ENCODE measurements at regions of chr1 and their contacts with region 1.

Region 1: DNA sequence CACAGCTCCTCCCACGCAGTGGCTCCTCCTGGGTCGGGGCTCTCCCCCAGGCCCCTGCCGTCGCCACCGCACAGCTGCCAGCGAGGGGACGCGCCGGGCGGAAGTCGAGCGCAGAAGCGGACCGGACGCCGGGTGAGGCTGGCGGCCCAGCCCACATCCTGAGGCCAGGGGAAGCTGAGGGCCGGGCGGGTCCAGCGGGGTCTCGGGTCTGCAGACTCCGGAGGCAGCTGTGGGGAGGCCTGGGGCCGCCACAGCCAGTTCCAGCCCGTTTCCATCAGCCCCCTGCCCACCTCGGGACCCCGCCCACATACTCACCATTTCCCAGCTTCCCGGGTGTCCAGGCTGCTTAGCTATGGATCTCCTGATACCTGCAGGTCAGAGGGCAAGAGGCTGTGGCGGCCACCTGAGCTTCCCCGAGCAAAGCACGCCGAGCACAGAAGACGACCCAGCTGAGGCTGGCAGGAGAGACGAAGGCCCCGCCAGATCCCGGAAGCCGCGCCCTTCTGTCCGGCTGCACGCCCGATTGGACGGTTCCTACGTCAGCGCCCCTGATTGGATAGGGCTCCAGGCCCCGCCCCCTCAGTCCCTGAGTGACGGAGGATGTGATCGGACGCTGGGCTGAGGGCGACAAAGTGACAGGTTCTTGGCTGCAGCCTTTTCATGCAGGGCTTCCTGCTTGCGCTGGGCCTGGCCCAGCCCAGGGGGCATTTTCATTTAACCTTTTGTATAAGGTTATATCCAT is 38.7 kb upstream of the ZNF124 start:
- DNase-seq: peak; percentile 99
- H3K4me3 Mint-ChIP-seq: peak overlapping the region; percentile 98
- H3K27ac Mint-ChIP-seq: peak overlapping the region; percentile 98
- H3K4me1 Mint-ChIP-seq: peaks cover 23% of the 10 kb centered on the region
- H3K27me3 Mint-ChIP-seq: peaks cover 25% of the 10 kb centered on the region
- CTCF ChIP-seq: no peak

Region 2: DNA sequence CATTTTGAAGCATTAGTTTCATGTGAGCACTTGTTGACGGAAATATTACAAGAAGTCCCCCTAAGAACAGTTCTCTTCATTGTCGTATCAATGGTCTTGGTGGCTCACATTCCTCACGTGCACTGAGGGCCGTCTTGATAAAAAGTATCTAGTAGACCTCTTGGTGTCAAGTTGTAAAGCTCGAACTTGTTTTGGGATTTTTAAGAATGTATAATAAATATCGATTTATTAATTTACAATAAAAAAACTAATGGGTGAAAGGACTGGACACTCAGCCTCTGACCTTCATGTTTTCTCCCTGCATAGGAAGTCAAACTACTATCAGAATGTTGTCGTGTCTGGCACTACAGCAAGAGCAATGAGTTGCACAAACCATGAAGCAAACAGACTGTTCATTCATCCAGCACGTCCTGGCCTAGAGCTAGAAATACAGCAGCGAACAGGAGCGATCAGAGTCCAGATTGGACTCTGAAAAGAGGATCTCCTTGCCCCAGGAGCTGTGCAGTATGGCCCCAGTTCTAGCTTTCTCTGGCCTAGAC is 1022.6 kb before region 1 on chr1:
- CTCF ChIA-PET with region 1: no interaction called
- POLR2A ChIA-PET with region 1: no interaction called
- intact Hi-C with region 1: no loop called
- DNase-seq: no peak
- H3K4me3 Mint-ChIP-seq: no peak overlapping the region
- H3K27ac Mint-ChIP-seq: no peak overlapping the region
- H3K4me1 Mint-ChIP-seq: no peaks in the 10 kb centered on the region
- H3K27me3 Mint-ChIP-seq: no peaks in the 10 kb centered on the region
- CTCF ChIP-seq: no peak

Region 3: DNA sequence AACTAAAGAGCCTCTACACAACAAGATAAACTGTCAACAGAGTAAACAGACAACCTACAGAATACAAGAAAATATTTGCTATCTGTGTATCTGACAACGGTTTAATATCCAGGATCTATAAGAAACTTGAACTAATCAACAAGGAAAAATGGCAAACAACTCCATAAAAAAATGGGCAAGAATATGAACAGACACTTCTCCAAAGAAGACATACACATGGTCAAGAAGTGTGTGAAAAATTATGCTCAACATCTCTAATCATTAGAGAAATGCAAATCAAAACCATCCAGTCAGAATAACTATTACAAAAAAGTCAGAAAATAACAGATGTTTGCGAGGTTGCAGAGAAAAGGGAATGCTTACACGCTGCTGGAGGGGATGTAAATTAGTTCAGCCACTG is 139.9 kb before region 1 on chr1:
- CTCF ChIA-PET with region 1: no interaction called
- POLR2A ChIA-PET with region 1: no interaction called
- intact Hi-C with region 1: no loop called
- DNase-seq: no peak
- H3K4me3 Mint-ChIP-seq: no peak overlapping the region
- H3K27ac Mint-ChIP-seq: no peak overlapping the region
- H3K4me1 Mint-ChIP-seq: no peaks in the 10 kb centered on the region
- H3K27me3 Mint-ChIP-seq: no peaks in the 10 kb centered on the region
- CTCF ChIP-seq: no peak

Region 4: GRCh38 chr1:247222840-247223239 is 12.3 kb after region 1 on chr1:
- CTCF ChIA-PET with region 1: interaction called, 4 read pairs
- POLR2A ChIA-PET with region 1: interaction called, 10 read pairs
- intact Hi-C with region 1: no loop called
- DNase-seq: no peak
- H3K4me3 Mint-ChIP-seq: no peak overlapping the region
- H3K27ac Mint-ChIP-seq: no peak overlapping the region
- H3K4me1 Mint-ChIP-seq: no peaks in the 10 kb centered on the region
- H3K27me3 Mint-ChIP-seq: peaks cover 7% of the 10 kb centered on the region
- CTCF ChIP-seq: no peak

Region 5: GRCh38 chr1:247241687-247242086 is 31.1 kb after region 1 on chr1:
- CTCF ChIA-PET with region 1: interaction called, 3 read pairs
- POLR2A ChIA-PET with region 1: interaction called, 14 read pairs
- intact Hi-C with region 1: no loop called
- DNase-seq: peak; percentile 27
- H3K4me3 Mint-ChIP-seq: no peak overlapping the region
- H3K27ac Mint-ChIP-seq: no peak overlapping the region
- H3K4me1 Mint-ChIP-seq: peaks cover 5% of the 10 kb centered on the region
- H3K27me3 Mint-ChIP-seq: no peaks in the 10 kb centered on the region
- CTCF ChIP-seq: no peak

Region 6: DNA sequence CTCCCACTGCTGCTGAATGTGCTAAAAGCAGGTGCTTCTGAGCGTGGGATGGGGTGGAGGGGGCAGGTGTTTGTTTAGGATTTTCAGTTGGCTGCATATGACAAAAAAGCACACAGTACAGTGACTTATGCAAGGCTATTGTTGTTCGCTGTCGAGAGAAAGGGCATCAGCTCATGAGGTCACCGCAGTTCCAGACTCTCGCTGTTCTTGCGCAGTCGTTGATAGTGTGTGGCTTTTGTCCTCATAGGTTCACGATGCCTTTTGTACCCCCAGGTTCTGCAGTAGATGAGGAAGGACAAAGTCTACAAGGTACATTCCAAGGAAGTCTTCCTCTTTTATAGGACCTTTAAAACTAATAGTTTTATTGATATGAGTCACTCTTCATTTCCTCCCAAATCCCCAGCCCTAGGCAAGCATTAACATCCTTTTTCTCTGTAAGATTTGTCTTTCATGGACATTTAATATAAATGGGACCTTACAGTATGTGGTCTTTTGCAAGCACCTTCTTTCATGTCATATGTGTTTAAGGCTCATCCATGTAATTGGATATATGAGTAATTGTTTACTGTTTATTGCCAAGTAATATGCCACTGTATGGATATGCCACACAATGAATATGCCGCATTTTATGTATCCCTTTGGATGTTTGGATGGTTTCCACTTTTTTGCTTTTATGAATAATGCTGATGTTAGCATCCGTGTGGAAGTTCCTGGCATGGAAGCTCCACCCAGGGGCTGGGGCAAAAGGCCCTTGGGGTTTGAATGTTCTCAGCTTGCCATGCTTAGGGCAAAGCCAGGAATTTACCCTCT is 191.0 kb after region 1 on chr1:
- CTCF ChIA-PET with region 1: no interaction called
- POLR2A ChIA-PET with region 1: no interaction called
- intact Hi-C with region 1: no loop called
- DNase-seq: peak; percentile 49
- H3K4me3 Mint-ChIP-seq: peak overlapping the region; percentile 49
- H3K27ac Mint-ChIP-seq: peak overlapping the region; percentile 41
- H3K4me1 Mint-ChIP-seq: peaks cover 21% of the 10 kb centered on the region
- H3K27me3 Mint-ChIP-seq: no peaks in the 10 kb centered on the region
- CTCF ChIP-seq: no peak